Heart left ventricle (tissue), 16 donors: ENCODE measurements at regions of chr1 and their contacts with region 1.

Region 1: DNA sequence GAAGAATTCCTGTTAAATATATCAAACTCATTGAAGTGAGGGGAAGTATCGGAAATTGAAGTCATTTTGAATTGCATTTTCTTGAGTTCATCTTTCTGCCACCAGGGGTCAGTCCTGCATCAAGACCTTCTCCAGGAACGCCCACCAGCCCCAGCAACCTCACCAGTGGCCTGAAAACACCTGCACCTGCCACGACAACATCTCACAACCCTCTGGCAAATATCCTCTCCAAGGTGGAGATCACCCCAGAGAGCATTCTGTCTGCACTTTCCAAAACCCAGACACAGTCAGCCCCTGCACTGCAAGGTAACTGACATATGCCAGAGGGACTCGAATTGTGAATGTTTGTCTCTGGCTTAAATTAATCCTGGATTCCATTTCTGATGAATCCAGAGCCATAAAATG is 22.8 kb upstream of the TARS2 start:
- DNase-seq: peak in 4 of 5 donors; percentile 28 to 56 (median 46)
- ATAC-seq: peak in 3 of 4 donors; percentile 58 to 67 (median 67)
- H3K4me3 ChIP-seq: no peak overlapping the region
- H3K27ac ChIP-seq: no peak overlapping the region
- H3K4me1 ChIP-seq: peaks cover 0 to 1% (median 0%) of the 10 kb centered on the region in 12 donors
- H3K27me3 ChIP-seq: no peaks in the 10 kb centered on the region
- CTCF ChIP-seq: peak; percentile 57 to 85 (median 80)
- POLR2A ChIP-seq: no peak

Region 2: DNA sequence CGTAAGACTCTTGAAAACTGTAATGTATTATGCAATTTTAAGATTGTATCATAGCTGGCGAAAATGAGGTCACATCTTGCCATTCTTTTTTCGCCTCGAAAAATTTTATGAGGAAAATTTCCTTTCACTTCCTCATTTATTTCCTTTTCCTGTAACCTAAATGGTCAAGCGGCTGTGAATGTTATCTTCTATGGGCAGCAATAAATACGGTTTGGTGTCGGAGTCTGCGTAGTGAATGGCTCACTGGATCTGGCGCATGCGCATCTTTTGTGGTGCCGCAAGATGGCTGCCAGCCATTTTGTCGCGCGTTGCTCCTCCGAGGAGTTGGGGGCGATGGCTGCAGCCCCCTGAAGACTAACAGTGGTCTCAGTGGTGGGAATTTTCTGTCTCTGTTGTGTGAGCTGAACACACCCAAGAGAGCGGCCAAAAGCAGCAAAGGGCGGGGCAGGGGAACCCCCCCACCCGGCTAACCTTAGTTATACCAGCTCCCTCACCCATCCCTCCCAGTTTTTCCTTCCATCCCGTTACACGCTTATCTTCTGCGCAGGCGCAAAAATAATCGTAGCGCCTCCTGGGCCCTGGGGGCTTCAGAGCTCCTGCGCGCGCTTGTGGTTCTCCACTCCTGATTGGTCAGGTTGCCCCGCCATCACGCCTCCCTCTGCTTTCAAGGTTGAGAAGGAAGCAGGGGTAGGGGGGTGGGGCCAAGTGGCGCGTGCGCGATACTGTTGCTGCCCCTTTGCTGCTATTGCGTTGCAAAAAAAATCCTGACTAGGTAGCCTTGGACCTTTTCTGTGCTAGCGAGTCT is 100.8 kb before region 1 on chr1 and contains the start of gene RPRD2:
- intact Hi-C with region 1: no loop called
- DNase-seq: peak; percentile 99 to 100 (median 100)
- ATAC-seq: peak; percentile 98 to 99 (median 99)
- H3K4me3 ChIP-seq: peak within 1 kb of the TSS; percentile 27 to 91 (median 72)
- H3K27ac ChIP-seq: peak within 1 kb of the TSS; percentile 92 to 99 (median 98)
- H3K4me1 ChIP-seq: peaks cover 0 to 28% (median 14%) of the 10 kb centered on the region in 12 donors
- H3K27me3 ChIP-seq: no peaks in the 10 kb centered on the region
- CTCF ChIP-seq: peak in 1 of 12 donors; percentile 11
- POLR2A ChIP-seq: peak in 1 of 2 donors; percentile 62
- total RNA-seq, gene RPRD2: 19.4 to 33.4 (median 25.3) TPM

Region 3: DNA sequence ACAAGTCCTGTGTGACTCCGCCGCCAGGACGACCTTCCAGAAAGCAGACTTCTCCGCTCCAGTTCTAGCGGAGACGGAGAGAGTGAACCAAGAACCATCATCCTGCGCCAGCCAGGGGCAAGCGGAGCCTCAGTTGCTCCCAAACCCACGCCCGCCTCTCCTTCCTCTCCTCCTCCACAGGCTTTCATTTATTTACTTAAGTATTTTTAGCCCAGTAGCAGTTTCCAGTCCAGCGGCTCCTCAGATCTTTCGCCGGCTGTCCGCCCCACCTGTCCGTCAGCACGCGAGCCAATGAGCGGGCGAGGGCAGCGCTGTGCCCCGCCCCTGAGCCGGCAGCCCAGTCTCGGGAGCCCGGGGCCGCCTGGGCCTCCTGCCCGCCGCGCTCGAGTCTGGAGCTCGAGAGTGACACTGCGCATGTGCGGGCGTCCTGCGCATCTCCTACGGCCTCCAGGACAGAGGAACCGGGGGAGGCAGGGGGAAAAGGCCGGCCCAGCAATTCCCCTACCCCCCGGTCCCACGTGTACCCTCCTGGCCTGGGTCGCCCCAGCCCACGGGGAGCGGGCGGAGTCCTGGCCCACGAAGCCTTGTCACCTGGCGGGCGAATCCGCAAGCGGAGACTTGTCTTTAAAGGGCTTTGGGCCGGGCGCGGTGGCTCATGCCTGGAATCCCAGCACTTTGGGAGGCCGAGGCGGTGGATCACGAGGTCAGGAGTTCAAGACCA is 51.1 kb after region 1 on chr1 and contains the start of gene FALEC:
- intact Hi-C with region 1: no loop called
- DNase-seq: peak; percentile 97 to 99 (median 98)
- ATAC-seq: peak; percentile 99
- H3K4me3 ChIP-seq: peak within 1 kb of the TSS; percentile 55 to 86 (median 63)
- H3K27ac ChIP-seq: peak within 1 kb of the TSS; percentile 72 to 93 (median 85)
- H3K4me1 ChIP-seq: peaks cover 0 to 16% (median 11%) of the 10 kb centered on the region in 12 donors
- H3K27me3 ChIP-seq: no peaks in the 10 kb centered on the region
- CTCF ChIP-seq: no peak
- POLR2A ChIP-seq: peak in 1 of 2 donors; percentile 65
- total RNA-seq, gene FALEC: 0.51 to 0.96 TPM in 2 of 9 donors, not detected in the others

Region 4: DNA sequence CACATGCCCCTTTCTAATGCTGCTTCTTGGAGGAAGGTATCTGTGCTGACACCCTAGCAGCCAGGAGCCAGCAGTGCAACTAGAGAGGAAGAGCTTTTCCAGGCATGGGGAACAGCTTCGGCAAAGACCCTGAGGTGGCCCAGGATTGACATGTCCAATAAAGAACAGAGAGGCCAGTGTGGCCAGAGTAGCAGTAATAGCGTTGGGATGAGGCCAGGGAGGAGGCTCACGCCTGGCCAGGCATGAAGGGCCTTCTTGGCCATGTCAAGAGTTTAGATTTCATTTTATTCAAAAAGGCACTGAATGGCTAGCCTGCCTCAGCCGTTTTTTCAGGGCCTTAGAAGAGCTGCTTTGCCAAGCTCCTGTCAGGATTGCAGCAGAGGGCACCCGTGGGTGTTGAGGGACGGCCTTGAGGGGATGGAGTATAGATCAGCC is 68.5 kb after region 1 on chr1:
- intact Hi-C with region 1: loop called in 9 of 10 experiments (anchors 1 to 5 kb)
- DNase-seq: peak in 1 of 5 donors; percentile 19
- ATAC-seq: no peak
- H3K4me3 ChIP-seq: peak overlapping the region in 1 of 12 donors; percentile 2
- H3K27ac ChIP-seq: peak overlapping the region in 11 of 12 donors; percentile 37 to 86 (median 74)
- H3K4me1 ChIP-seq: peaks cover 0 to 42% (median 9%) of the 10 kb centered on the region in 12 donors
- H3K27me3 ChIP-seq: no peaks in the 10 kb centered on the region
- CTCF ChIP-seq: peak in 5 of 12 donors; percentile 13 to 33 (median 31)
- POLR2A ChIP-seq: no peak

Region 5: DNA sequence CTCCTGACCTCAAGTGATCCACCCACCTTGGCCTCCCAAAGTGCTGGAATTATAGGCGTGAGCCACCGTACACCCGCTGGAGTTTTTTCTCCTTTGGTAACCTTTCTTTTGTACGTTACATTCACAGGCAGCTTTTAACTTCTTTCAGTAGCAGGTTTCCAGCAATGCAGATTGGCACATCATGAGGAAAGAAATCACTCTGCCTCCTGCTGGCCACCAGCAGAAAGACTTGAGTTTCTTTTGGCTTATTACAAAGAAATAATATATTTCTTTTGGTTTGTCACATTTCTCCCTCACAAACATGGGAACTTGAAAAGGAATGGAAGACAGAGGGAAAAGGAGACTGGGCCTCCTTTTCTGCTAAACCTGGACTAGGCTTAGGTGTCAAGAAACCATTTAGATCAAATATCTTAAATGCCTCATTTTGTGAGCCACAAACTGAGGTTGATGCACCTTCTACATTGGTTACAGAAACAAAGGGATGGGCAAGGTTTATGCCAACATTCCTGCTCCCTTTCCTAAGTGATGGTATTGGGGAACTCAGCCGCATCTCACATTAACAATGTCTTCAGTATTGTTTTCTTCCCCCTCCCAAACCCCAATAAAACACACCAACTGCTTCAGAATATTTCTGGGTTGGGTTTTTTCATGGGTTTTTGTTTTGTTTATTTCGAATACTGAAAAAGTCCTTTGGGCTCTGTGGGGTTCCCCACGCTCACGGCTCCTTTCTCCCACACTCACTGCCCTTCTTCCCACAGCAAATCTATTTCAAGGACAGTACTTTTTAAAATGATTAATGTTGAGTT is 157.3 kb after region 1 on chr1:
- intact Hi-C with region 1: loop called in 4 of 10 experiments (anchors 5 to 10 kb)
- DNase-seq: peak in 3 of 5 donors; percentile 47 to 64 (median 53)
- ATAC-seq: peak in 2 of 4 donors; percentile 24 to 25
- H3K4me3 ChIP-seq: no peak overlapping the region
- H3K27ac ChIP-seq: peak overlapping the region; percentile 53 to 88 (median 70)
- H3K4me1 ChIP-seq: peaks cover 16 to 54% (median 43%) of the 10 kb centered on the region in 12 donors
- H3K27me3 ChIP-seq: no peaks in the 10 kb centered on the region
- CTCF ChIP-seq: peak; percentile 47 to 81 (median 71)
- POLR2A ChIP-seq: no peak

Region 6: GRCh38 chr1:150629115-150629928 is 164.9 kb after region 1 on chr1 and contains the start of gene ENSA:
- intact Hi-C with region 1: loop called in 4 of 10 experiments (anchors 5 to 10 kb)
- DNase-seq: peak; percentile 97 to 100 (median 98)
- ATAC-seq: peak; percentile 97 to 98 (median 97)
- H3K4me3 ChIP-seq: peak within 1 kb of the TSS; percentile 15 to 85 (median 70)
- H3K27ac ChIP-seq: peak within 1 kb of the TSS; percentile 85 to 99 (median 96)
- H3K4me1 ChIP-seq: peaks cover 3 to 35% (median 21%) of the 10 kb centered on the region in 12 donors
- H3K27me3 ChIP-seq: no peaks in the 10 kb centered on the region
- CTCF ChIP-seq: no peak
- POLR2A ChIP-seq: peak; percentile 82 to 85
- total RNA-seq, gene ENSA: 118 to 186 (median 130) TPM

Region 7: DNA sequence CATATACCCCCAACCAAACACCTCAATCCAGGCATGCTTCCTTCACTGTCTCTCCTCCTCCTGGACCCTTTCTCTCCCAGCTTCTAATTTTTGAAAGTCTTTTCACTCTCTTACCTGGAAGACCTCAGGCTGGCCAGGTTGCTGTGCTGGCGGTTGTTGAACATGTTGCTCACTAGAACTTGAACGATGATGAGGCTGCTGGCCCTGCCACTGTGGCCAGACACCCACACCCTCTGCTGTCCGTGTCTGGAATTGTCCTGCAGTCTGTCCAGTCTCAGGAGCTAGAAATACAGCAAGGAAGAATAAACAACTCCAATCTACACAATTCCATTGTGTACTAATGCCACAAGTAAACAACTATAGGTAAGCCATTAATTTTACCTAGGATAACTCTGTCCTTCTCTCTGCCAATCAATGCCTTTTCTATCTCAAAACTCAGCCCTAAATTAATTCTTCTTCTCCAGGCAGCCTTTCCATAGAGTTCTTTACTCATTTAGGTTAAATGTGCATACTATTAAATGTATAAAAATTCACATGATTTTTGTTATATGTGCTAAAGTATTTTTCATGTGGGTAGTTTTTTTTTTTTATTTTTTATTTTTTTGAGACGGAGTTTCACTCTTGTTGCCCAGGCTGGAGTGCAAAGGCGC is 348.8 kb after region 1 on chr1:
- intact Hi-C with region 1: loop called in 4 of 10 experiments (anchors 10 kb)
- DNase-seq: peak; percentile 28 to 69 (median 54)
- ATAC-seq: peak; percentile 68 to 86 (median 82)
- H3K4me3 ChIP-seq: no peak overlapping the region
- H3K27ac ChIP-seq: no peak overlapping the region
- H3K4me1 ChIP-seq: peaks cover 0 to 11% (median 1%) of the 10 kb centered on the region in 12 donors
- H3K27me3 ChIP-seq: no peaks in the 10 kb centered on the region
- CTCF ChIP-seq: peak; percentile 31 to 62 (median 52)
- POLR2A ChIP-seq: no peak